MCF 10A (cell line): ENCODE measurements at regions of chr10 and their contacts with region 1.

Region 1: GRCh38 chr10:88932539-88933256 is 19.9 kb downstream of the ACTA2 start:
- DNase-seq: peak; percentile 91
- H3K4me3 Mint-ChIP-seq: no peak overlapping the region
- H3K27ac Mint-ChIP-seq: peak overlapping the region; percentile 64
- H3K4me1 Mint-ChIP-seq: peaks cover 25% of the 10 kb centered on the region
- H3K27me3 Mint-ChIP-seq: no peaks in the 10 kb centered on the region
- CTCF ChIP-seq: peak; percentile 77

Region 2: GRCh38 chr10:88565072-88565471 is 367.6 kb before region 1 on chr10:
- CTCF ChIA-PET with region 1: interaction called, 36 read pairs
- POLR2A ChIA-PET with region 1: interaction called, 3 read pairs
- intact Hi-C with region 1: loop called (anchors 1 kb)
- DNase-seq: peak; percentile 35
- H3K4me3 Mint-ChIP-seq: no peak overlapping the region
- H3K27ac Mint-ChIP-seq: no peak overlapping the region
- H3K4me1 Mint-ChIP-seq: no peaks in the 10 kb centered on the region
- H3K27me3 Mint-ChIP-seq: peaks cover 17% of the 10 kb centered on the region
- CTCF ChIP-seq: peak; percentile 48

Region 3: DNA sequence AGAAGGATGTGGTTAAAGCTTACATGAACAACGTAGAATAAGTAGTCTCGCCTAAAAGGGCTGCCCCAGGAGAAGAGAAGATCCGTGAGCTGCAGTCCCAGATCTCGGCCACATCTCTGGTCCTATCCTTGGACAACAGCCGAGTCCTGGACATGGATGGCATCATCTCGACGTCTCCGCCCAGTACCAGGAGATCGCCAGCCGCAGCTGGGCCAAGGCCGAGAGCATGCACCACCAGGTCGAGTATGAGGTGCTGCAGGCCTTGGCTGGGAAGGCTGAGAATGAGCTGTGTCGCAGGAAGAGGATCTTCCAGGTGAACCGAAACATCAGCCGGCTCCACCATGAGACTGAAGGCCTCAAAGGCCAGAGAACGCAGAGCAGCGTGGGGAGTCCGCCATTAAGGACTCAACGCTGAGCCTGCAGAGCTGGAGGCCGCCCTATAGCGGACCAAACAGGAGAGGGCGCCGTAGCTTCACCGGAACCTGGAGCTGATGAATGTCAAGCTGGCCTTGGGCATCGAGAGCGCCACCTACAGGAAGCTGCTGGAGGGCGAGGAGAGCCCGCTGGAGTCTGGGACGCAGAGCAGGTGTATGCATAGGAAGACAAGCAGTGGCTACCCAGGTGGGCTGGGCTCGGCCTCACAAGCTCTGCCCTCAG is 204.5 kb before region 1 on chr10:
- CTCF ChIA-PET with region 1: no interaction called
- POLR2A ChIA-PET with region 1: no interaction called
- intact Hi-C with region 1: no loop called
- DNase-seq: peak; percentile 1
- H3K4me3 Mint-ChIP-seq: no peak overlapping the region
- H3K27ac Mint-ChIP-seq: no peak overlapping the region
- H3K4me1 Mint-ChIP-seq: no peaks in the 10 kb centered on the region
- H3K27me3 Mint-ChIP-seq: no peaks in the 10 kb centered on the region
- CTCF ChIP-seq: peak; percentile 18

Region 4: GRCh38 chr10:88759366-88760101 is 173.2 kb before region 1 on chr10 and contains the start of gene LIPN:
- CTCF ChIA-PET with region 1: no interaction called
- POLR2A ChIA-PET with region 1: no interaction called
- intact Hi-C with region 1: no loop called
- DNase-seq: no peak
- H3K4me3 Mint-ChIP-seq: no peak within 1 kb of the TSS
- H3K27ac Mint-ChIP-seq: no peak within 1 kb of the TSS
- H3K4me1 Mint-ChIP-seq: no peaks in the 10 kb centered on the region
- H3K27me3 Mint-ChIP-seq: no peaks in the 10 kb centered on the region
- CTCF ChIP-seq: no peak
- total RNA-seq, gene LIPN: not detected in 2 replicates

Region 5: GRCh38 chr10:88835096-88835909 is 97.4 kb before region 1 on chr10:
- CTCF ChIA-PET with region 1: interaction called, 588 read pairs
- POLR2A ChIA-PET with region 1: interaction called, 43 read pairs
- intact Hi-C with region 1: loop called (anchors 1 kb)
- DNase-seq: peak; percentile 89
- H3K4me3 Mint-ChIP-seq: no peak overlapping the region
- H3K27ac Mint-ChIP-seq: no peak overlapping the region
- H3K4me1 Mint-ChIP-seq: no peaks in the 10 kb centered on the region
- H3K27me3 Mint-ChIP-seq: no peaks in the 10 kb centered on the region
- CTCF ChIP-seq: peak; percentile 78

Region 6: DNA sequence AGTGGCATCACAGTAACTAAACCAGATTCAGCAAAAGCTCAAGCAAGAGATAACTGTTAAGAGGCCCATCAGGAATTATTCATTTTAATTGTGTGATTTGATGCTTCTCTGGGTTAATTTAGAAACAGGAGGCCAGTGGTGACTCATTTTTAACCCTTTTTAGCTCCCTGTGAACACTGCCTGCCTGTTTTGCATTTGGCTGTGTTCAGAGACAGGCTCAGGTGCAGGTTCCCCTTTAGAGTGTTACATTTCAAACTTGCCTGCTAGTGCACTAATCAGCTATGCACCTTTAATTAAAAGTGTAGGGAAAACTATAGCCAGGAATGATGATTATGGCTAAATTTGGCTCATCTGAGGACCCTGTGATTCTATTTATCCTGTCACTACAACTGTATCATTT is 46.1 kb before region 1 on chr10:
- CTCF ChIA-PET with region 1: interaction called, 17 read pairs
- POLR2A ChIA-PET with region 1: interaction called, 17 read pairs
- intact Hi-C with region 1: loop called (anchors 2 kb)
- DNase-seq: peak; percentile 25
- H3K4me3 Mint-ChIP-seq: no peak overlapping the region
- H3K27ac Mint-ChIP-seq: no peak overlapping the region
- H3K4me1 Mint-ChIP-seq: peaks cover 41% of the 10 kb centered on the region
- H3K27me3 Mint-ChIP-seq: no peaks in the 10 kb centered on the region
- CTCF ChIP-seq: no peak

Region 7: DNA sequence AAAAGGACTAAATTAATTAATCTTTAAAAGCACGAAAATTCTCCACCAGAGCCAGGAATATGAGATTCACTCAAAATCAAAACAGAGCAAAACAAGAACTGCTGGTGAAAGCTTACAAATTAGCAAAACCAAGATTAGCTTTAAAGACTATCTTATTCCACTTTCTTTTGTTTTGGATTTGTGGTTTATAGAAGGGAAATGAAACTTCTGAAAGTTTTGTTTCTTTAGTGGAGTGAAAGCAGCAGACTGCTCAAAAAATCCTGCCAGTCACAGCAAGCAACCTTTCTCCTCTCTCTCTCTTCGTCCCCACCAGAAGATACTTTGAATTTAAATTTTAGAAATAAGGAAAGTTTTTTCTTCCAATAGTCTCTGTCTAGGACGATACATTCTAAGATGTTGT is 12.1 kb after region 1 on chr10:
- CTCF ChIA-PET with region 1: interaction called, 26 read pairs
- POLR2A ChIA-PET with region 1: interaction called, 3 read pairs
- intact Hi-C with region 1: no loop called
- DNase-seq: no peak
- H3K4me3 Mint-ChIP-seq: no peak overlapping the region
- H3K27ac Mint-ChIP-seq: no peak overlapping the region
- H3K4me1 Mint-ChIP-seq: no peaks in the 10 kb centered on the region
- H3K27me3 Mint-ChIP-seq: no peaks in the 10 kb centered on the region
- CTCF ChIP-seq: no peak

Region 8: GRCh38 chr10:88990384-88991160 is 57.9 kb after region 1 on chr10 and contains the start of gene FAS:
- CTCF ChIA-PET with region 1: interaction called, 252 read pairs
- POLR2A ChIA-PET with region 1: interaction called, 63 read pairs
- intact Hi-C with region 1: loop called (anchors 1 kb)
- DNase-seq: peak; percentile 95
- H3K4me3 Mint-ChIP-seq: peak within 1 kb of the TSS; percentile 86
- H3K27ac Mint-ChIP-seq: peak within 1 kb of the TSS; percentile 93
- H3K4me1 Mint-ChIP-seq: peaks cover 23% of the 10 kb centered on the region
- H3K27me3 Mint-ChIP-seq: no peaks in the 10 kb centered on the region
- CTCF ChIP-seq: no peak
- total RNA-seq, gene FAS: 55.6 and 60.2 TPM in 2 replicates

Region 9: GRCh38 chr10:89122433-89123051 is 189.8 kb after region 1 on chr10:
- CTCF ChIA-PET with region 1: no interaction called
- POLR2A ChIA-PET with region 1: no interaction called
- intact Hi-C with region 1: no loop called
- DNase-seq: peak; percentile 10
- H3K4me3 Mint-ChIP-seq: no peak overlapping the region
- H3K27ac Mint-ChIP-seq: no peak overlapping the region
- H3K4me1 Mint-ChIP-seq: peaks cover 15% of the 10 kb centered on the region
- H3K27me3 Mint-ChIP-seq: no peaks in the 10 kb centered on the region
- CTCF ChIP-seq: no peak

Region 10: GRCh38 chr10:89217057-89217990 is 284.6 kb after region 1 on chr10:
- CTCF ChIA-PET with region 1: interaction called, 26 read pairs
- POLR2A ChIA-PET with region 1: interaction called, 7 read pairs
- intact Hi-C with region 1: loop called (anchors 1 kb)
- DNase-seq: peak; percentile 73
- H3K4me3 Mint-ChIP-seq: no peak overlapping the region
- H3K27ac Mint-ChIP-seq: no peak overlapping the region
- H3K4me1 Mint-ChIP-seq: peaks cover 7% of the 10 kb centered on the region
- H3K27me3 Mint-ChIP-seq: no peaks in the 10 kb centered on the region
- CTCF ChIP-seq: peak; percentile 55

Region 11: DNA sequence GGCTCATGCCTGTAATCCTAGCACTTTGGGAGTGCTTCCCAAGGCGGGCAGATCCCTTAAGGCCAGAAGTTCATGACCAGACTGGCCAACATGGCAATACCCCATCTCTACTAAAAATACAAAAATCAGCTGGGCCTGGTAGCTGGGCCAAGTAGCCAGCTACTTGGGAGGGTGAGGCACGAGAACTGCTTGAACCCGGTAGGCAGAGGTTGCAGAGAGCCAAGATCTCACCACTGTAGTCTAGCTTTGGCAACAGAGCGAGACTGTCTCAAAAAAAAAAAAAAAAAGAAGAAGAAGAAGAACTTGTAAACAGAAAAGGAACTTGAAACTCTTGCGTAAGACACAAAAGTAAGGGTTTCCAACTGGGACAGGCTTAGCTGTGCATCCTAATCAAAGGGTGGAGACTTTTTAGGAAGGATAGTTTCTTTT is 363.5 kb after region 1 on chr10:
- CTCF ChIA-PET with region 1: no interaction called
- POLR2A ChIA-PET with region 1: no interaction called
- intact Hi-C with region 1: no loop called
- DNase-seq: peak; percentile 77
- H3K4me3 Mint-ChIP-seq: no peak overlapping the region
- H3K27ac Mint-ChIP-seq: peak overlapping the region; percentile 82
- H3K4me1 Mint-ChIP-seq: peaks cover 20% of the 10 kb centered on the region
- H3K27me3 Mint-ChIP-seq: no peaks in the 10 kb centered on the region
- CTCF ChIP-seq: no peak